ENCODE measurements at regions of chr19 and their contacts with region 1.

Region 1: GRCh38 chr19:7919610-7920518 is at the start of gene SNAPC2:
- DNase-seq: peak; percentile 93
- ATAC-seq: peak; percentile 52
- H3K4me3 ChIP-seq: peak within 1 kb of the TSS; percentile 87
- H3K27ac ChIP-seq: peak within 1 kb of the TSS; percentile 77
- H3K4me1 ChIP-seq: peaks cover 33% of the 10 kb centered on the region
- H3K27me3 ChIP-seq: no peaks in the 10 kb centered on the region
- CTCF ChIP-seq: no peak
- total RNA-seq, gene SNAPC2: 40.1 and 61.7 TPM in 2 replicates

Region 2: DNA sequence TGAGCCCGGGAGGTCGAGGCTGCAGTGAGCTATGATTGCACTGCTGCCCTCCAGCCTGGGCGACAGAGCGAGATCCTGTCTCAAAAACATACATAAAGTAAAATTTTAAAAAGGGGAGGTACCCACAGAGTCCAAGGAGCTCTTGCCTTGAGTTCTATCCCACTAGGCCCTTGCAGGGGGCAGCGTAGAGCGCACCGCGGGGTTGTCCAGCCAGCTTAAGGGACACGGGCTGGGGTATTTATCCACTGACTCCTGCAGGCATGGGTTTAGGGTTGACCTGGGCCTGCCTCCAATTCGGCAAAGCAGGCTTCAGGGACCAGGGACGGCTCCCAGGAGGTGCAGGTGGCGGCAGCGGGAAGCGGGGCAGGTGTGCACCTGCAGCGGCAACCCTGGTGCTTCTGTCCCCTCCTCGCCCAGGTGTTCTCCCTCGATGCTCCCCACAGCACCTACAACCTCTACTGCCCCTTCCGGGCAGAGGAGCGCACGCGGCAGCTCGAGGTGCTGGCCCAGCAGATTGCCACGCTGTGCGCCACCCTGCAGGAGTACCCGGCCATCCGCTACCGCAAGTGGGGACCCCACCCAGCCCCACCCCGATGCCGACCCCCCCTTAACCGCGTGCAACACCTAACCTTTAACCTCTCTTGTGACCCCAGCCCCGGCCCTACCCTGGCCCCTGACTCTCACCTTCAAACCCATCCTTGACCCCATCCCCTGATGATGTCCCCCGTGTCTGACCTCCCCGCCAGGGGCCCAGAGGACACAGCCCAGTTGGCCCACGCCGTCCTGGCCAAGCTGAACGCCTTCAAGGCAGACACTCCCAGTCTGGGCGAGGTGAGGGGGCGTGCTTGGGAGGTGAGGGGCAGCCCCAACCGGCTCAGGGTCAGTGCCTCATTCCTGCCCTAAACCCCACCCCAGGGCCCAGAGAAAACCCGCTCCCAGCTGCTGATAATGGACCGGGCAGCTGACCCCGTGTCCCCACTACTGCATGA is 278.3 kb before region 1 on chr19:
- CTCF ChIA-PET with region 1: interaction called, 3 read pairs
- POLR2A ChIA-PET with region 1: interaction called, 26 read pairs
- intact Hi-C with region 1: no loop called
- DNase-seq: no peak
- ATAC-seq: no peak
- H3K4me3 ChIP-seq: no peak overlapping the region
- H3K27ac ChIP-seq: no peak overlapping the region
- H3K4me1 ChIP-seq: peaks cover 2% of the 10 kb centered on the region; the same call in 1 of the 2 replicates
- H3K27me3 ChIP-seq: no peaks in the 10 kb centered on the region
- CTCF ChIP-seq: peak; percentile 38; the same call in 1 of the 2 replicates

Region 3: GRCh38 chr19:7868676-7869452 is 51.0 kb before region 1 on chr19:
- CTCF ChIA-PET with region 1: interaction called, 19 read pairs
- POLR2A ChIA-PET with region 1: interaction called, 3 read pairs
- intact Hi-C with region 1: loop called (anchors 2 kb)
- DNase-seq: peak; percentile 95
- ATAC-seq: peak; percentile 52
- H3K4me3 ChIP-seq: peak overlapping the region; percentile 72
- H3K27ac ChIP-seq: peak overlapping the region; percentile 12; the same call in 1 of the 2 replicates
- H3K4me1 ChIP-seq: peaks cover 24% of the 10 kb centered on the region
- H3K27me3 ChIP-seq: no peaks in the 10 kb centered on the region
- CTCF ChIP-seq: peak; percentile 82

Region 4: DNA sequence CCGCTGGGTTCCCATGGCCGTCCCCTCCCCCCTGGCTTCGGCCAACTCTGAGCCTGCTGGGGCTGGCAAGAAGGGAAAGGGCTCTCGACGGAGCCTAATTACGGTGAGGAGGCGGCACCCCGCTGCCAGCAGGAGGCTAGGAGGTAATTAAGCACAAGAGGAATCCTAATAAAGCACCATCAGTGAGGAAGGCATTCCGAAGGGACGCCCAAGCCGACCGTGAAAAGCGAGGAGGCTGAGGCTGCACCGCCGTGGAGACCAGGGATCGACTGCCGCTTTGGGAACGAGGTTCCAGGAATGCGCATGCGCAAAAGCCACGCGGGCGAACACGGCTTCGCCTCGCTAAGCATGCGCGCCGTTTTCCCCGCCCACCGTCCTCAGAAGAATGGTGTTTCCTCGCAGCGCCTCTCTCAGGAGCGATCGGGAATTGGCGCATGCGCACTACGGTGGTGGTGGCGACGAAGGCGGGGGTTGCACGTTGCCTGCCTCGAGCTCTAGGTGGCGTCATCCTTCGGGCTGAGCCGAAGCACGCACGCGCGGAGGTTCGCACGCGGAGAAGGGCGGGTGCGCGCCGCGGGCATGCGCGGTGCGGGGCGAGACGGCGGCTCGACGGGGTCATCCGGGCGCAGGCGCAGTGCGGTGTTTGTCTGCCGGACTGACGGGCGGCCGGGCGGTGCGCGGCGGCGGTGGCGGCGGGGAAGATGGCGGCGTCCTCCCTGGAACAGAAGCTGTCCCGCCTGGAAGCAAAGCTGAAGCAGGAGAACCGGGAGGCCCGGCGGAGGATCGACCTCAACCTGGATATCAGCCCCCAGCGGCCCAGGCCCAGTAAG is 16.4 kb before region 1 on chr19 and contains the start of gene MAP2K7:
- CTCF ChIA-PET with region 1: interaction called, 7 read pairs
- POLR2A ChIA-PET with region 1: interaction called, 5 read pairs
- intact Hi-C with region 1: loop called (anchors 1 kb)
- DNase-seq: peak; percentile 100
- ATAC-seq: peak; percentile 83
- H3K4me3 ChIP-seq: peak within 1 kb of the TSS; percentile 77
- H3K27ac ChIP-seq: peak within 1 kb of the TSS; percentile 65
- H3K4me1 ChIP-seq: peaks cover 20% of the 10 kb centered on the region
- H3K27me3 ChIP-seq: no peaks in the 10 kb centered on the region
- CTCF ChIP-seq: peak; percentile 82
- total RNA-seq, gene MAP2K7: 39.3 and 40.5 TPM in 2 replicates

Region 5: GRCh38 chr19:7943444-7944176 is 23.7 kb after region 1 on chr19 and contains the start of gene TIMM44:
- CTCF ChIA-PET with region 1: interaction called, 15 read pairs
- POLR2A ChIA-PET with region 1: interaction called, 9 read pairs
- intact Hi-C with region 1: no loop called
- DNase-seq: peak; percentile 100
- ATAC-seq: peak; percentile 98
- H3K4me3 ChIP-seq: peak within 1 kb of the TSS; percentile 91
- H3K27ac ChIP-seq: peak within 1 kb of the TSS; percentile 75
- H3K4me1 ChIP-seq: peaks cover 14% of the 10 kb centered on the region
- H3K27me3 ChIP-seq: no peaks in the 10 kb centered on the region
- CTCF ChIP-seq: no peak
- total RNA-seq, gene TIMM44: 191 and 262 TPM in 2 replicates

Region 6: DNA sequence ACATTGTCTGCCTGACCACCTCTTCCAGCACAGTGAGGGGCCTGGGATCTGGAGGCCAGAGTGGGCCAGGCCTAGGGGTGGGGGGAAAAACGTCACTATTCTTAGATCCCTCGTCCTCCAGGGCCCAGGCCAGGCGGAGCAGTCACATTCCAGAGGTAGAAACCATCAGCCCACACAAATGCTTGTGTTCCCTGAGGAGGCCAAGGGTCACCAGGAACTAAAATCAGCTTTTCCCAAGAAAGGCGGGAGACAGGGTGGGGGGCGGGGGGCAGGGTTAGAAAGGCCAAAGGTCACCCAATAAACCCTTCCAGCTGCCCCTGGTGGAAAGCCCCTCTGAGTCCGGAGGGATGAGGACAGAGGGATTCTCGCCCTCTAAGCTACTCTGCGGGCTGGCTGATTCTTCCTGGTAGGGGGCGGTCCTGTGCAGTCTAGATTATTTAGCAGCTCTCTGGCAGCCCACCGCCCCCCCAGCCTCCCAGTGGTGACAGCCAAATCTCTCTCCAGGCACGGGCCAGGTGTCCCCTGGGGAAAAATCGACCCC is 109.2 kb after region 1 on chr19:
- CTCF ChIA-PET with region 1: no interaction called
- POLR2A ChIA-PET with region 1: interaction called, 17 read pairs
- intact Hi-C with region 1: no loop called
- DNase-seq: no peak
- ATAC-seq: no peak
- H3K4me3 ChIP-seq: no peak overlapping the region
- H3K27ac ChIP-seq: no peak overlapping the region
- H3K4me1 ChIP-seq: no peaks in the 10 kb centered on the region
- H3K27me3 ChIP-seq: no peaks in the 10 kb centered on the region
- CTCF ChIP-seq: no peak

Region 7: GRCh38 chr19:8389891-8390616 is 470.2 kb after region 1 on chr19 and contains the start of gene RAB11B:
- CTCF ChIA-PET with region 1: no interaction called
- POLR2A ChIA-PET with region 1: interaction called, 13 read pairs
- intact Hi-C with region 1: no loop called
- DNase-seq: peak; percentile 100
- ATAC-seq: peak; percentile 93
- H3K4me3 ChIP-seq: peak within 1 kb of the TSS; percentile 89
- H3K27ac ChIP-seq: peak within 1 kb of the TSS; percentile 94
- H3K4me1 ChIP-seq: peaks cover 39% of the 10 kb centered on the region
- H3K27me3 ChIP-seq: no peaks in the 10 kb centered on the region
- CTCF ChIP-seq: no peak
- total RNA-seq, gene RAB11B: 29.7 and 43.6 TPM in 2 replicates

Measured in PC-3 (cell line).